Posterior vena cava (tissue), 2 donors: ENCODE measurements at regions of chr7 and their contacts with region 1.

Region 1: DNA sequence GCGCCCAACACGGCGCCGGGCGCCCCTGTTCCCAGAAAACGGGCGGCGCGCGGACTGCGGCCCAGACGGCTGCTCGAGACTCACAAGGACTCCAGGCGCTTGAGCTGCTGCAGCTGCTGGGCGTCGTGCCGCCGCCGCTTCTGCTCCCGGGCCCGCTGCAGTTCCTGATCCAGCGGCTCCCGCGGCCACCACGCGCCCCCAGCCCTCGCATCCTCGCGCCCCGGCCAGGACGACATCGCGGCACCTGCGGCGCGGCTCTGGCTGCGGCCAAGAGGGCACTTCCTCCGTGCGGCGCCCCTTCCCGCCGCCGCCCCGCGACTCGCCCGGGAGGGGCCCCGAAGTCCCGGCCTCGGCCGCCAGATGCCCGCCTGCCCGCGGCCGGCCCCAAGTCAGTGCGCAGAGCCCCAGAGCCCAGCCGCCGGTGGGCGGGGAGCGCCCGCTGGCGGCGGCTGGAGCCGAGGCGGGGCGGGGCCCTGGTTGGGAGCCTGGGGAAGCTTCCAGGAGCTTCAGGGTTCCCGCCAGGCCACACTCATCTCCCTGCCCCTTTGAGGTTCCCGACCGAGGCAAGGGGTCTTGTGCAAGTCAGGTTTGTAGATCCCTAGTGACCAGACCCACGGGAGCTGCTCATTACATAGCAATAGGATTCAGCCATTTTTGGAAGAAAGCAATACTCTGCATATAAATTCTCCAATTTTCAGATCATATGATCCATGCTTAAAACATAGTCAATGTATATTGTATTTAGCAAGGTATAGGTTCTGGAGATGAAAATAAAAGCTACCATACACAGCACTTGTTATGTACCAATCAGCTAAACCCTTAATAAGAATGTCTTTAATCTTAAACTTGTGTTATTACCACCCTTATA is 14.2 kb upstream of the FKBP9 start:
- DNase-seq: peak; percentile 92

Region 2: DNA sequence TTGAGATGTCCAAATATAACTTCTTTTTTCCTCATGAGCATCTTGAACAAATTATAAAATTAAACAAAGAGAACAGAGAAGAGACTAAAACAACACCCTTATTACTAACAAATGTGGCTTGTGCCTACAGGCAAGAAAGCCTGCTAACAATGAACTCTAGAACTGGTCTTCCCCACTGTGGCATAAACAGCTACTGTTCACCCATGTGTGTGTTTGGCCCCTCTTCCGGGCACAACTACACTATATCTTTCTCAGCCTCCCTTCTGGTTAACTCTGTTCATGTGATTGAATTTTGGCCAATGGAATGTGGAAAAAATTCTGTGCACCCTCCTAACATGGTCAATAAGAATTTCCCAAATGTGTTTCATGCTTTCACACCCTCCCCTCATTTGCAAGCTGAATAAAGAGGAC is 168.5 kb before region 1 on chr7:
- intact Hi-C with region 1: no loop called
- DNase-seq: no peak

Region 3: DNA sequence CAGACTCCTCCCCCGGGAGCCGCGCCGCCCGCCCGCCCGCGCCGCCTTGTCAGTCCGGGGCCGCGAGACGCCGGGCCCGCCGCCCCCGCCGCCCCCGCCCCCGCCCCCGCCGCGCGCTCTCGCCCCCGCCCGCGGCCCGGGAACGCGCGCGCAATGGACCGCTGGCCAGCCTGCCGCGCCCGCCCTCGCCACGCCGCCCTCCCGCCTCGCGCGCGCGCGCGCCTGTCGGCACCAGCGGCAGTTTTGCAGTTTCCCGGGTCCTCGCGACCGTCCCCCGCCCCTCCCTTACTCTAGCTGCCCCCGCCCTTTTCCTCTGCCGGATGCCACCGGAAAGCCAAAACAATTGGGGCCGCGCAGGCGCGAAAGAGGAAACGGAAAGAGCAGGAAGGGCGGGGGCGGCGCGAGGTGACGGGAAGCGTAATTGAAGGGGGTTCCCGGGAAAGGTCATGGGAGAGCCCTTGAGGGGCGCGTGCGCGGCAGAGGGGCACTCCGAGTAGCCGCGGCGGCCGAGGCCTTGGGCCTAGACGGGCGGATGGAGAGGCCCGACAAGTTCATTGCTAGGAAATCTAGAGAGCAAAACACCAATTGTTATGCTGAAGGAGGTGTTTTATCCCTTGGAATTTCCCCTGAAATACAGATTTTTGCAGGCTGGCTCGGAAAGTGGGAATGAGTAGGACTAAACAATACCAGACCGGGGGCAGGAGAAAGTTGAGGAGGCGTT is 51.1 kb before region 1 on chr7:
- intact Hi-C with region 1: loop called in 1 of 2 experiments (anchors 10 kb)
- DNase-seq: peak; percentile 99